Adrenal gland (tissue), 19 donors: ENCODE measurements at regions of chr17 and their contacts with region 1.

Region 1: DNA sequence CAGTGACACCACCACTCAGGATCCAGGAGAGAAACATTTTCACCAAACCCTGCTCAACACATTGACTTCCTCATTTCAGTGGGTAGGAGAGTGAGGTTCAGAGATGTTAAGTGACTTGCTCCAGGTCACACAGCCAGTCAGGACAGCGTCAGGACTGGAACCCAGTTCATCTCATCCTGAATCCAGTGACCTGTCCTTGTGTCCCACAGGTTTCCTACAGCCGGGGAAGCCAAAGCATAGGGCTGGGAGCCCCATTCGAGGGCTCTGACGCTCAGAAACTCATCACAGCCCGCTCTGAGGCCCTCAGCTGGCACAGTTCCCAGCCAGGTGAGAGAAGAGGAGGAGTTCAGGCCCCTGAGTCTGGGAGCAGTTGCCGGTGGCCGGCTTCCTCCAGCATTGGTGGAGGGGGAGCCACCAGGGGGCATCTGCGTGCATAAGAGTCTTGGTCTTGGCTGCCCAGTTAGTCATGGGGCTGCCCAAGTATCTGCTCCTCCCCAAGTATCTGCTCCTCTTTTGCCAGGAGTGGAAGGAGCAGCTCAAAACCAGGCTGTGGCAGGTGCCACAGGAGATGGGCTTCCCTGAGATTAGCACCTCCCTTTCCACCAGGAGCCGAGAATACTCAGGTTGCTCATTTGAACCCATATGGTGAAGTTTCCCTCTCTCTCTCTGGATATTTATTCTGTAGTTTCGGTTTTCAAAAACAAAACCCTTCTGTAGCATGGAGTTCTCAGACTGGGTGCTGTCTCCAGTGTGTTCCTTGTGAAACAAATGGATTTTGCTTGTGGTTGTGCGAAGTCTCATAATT is 56.0 kb downstream of the TNFRSF13B start:
- DNase-seq: peak in 5 of 7 donors; percentile 38 to 62 (median 54)
- H3K4me3 ChIP-seq: no peak overlapping the region
- H3K27ac ChIP-seq: no peak overlapping the region
- H3K4me1 ChIP-seq: no peaks in the 10 kb centered on the region
- H3K27me3 ChIP-seq: peaks cover 6% of the 10 kb centered on the region
- CTCF ChIP-seq: peak in 4 of 6 experiments; percentile 12 to 42 (median 16)
- POLR2A ChIP-seq: no peak

Region 2: GRCh38 chr17:16987830-16988601 is 72.1 kb after region 1 on chr17:
- intact Hi-C with region 1: loop called in 1 of 2 experiments (anchors 5 kb)
- DNase-seq: peak; percentile 53 to 81 (median 72)
- H3K4me3 ChIP-seq: no peak overlapping the region
- H3K27ac ChIP-seq: peak overlapping the region in 2 of 5 donors; percentile 39 to 76
- H3K4me1 ChIP-seq: peaks cover 0 to 12% of the 10 kb centered on the region in 2 donors
- H3K27me3 ChIP-seq: no peaks in the 10 kb centered on the region
- CTCF ChIP-seq: no peak
- POLR2A ChIP-seq: no peak